Activated CD8-positive, alpha-beta T cell treated with anti-CD3 and anti-CD28 coated beads for 36 hours (primary cell): ENCODE measurements at regions of chr22 and their contacts with region 1.

Region 1: DNA sequence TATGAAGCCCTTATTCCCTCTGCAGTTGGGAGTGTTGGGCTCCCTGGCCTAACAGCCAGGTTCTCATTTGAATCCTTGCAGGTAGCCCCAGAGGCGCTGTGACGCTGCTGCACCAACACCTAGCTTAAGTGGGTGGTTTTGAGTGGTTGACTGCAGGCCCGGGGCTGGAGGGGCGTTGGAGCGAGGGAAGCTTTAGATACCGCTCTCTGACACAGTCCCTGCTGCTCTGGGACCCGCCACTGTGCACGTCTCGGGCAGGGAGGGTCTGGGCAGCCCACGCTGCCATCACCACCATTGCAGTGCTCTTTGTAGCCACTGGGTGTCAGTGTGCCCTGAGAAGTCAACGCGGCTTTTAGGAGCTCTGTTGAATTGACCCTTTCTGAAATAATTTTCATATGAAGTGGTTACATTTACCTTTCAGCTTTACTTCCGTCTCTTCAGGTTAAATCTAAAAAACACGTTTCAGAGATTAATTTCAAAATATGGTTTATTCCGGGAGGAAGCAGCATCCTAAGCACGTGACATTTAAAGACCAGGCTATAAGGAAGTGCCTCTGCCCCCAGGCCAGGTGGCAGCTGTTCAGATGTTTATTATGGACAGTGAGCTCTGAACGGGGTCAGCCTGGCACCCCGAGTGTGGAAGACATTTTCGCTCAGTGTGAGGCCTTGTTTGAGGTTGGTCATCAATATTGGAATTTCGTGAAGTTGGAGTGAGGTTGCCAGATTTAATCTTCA is 30.9 kb upstream of the PARVB start:
- DNase-seq: peak; percentile 72
- ATAC-seq: peak; percentile 86
- H3K4me3 Mint-ChIP-seq: no peak overlapping the region
- H3K27ac Mint-ChIP-seq: no peak overlapping the region
- H3K4me1 Mint-ChIP-seq: peaks cover 21% of the 10 kb centered on the region
- H3K27me3 Mint-ChIP-seq: no peaks in the 10 kb centered on the region
- CTCF ChIP-seq: peak; percentile 96

Region 2: GRCh38 chr22:44026630-44027511 is 33.7 kb after region 1 on chr22:
- CTCF ChIA-PET with region 1: interaction called, 19 read pairs
- POLR2A ChIA-PET with region 1: interaction called, 6 read pairs
- intact Hi-C with region 1: no loop called
- DNase-seq: peak; percentile 93
- ATAC-seq: peak; percentile 80
- H3K4me3 Mint-ChIP-seq: peak overlapping the region; percentile 89
- H3K27ac Mint-ChIP-seq: peak overlapping the region; percentile 97
- H3K4me1 Mint-ChIP-seq: peaks cover 49% of the 10 kb centered on the region
- H3K27me3 Mint-ChIP-seq: peaks cover 7% of the 10 kb centered on the region
- CTCF ChIP-seq: no peak

Region 3: DNA sequence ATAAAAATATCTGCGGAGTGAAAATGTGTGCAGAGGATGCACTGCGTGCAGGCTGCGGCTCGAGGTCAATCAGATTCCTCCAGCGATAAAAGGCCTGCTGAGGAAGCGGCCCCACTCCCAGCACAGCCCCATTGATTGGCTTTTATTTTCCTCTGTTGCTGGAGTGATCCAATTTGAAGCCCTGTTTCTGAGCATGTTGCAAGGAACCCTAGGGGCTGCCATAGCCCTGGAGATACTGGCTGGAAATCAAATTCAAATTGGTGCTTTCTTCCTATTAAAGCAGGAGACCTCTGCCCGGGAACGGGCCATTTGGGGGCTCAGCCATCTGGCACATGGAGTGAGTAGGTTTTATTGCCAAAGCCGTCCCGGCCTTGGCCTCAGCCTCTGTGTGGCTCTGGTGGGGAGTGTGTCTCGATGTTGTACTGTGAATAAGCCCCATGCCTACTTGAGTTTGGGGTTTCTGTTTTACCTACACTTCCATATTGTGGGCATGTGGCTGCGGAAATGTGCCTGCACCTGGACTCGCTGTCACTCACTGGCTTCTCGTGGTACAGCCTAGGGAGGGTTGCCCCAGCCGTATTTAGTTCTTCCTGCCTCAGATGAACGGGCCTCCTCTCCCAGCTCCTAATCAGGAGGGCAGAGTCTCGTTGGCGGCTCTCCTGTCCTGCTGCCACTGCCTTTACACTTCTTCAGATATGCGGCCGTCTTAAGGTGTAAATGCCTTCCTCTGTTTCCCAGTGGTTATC is 56.5 kb after region 1 on chr22:
- CTCF ChIA-PET with region 1: interaction called, 10 read pairs
- POLR2A ChIA-PET with region 1: no interaction called
- intact Hi-C with region 1: no loop called
- DNase-seq: no peak
- ATAC-seq: no peak
- H3K4me3 Mint-ChIP-seq: no peak overlapping the region
- H3K27ac Mint-ChIP-seq: no peak overlapping the region
- H3K4me1 Mint-ChIP-seq: peaks cover 8% of the 10 kb centered on the region
- H3K27me3 Mint-ChIP-seq: peaks cover 6% of the 10 kb centered on the region
- CTCF ChIP-seq: no peak

Region 4: GRCh38 chr22:44180706-44181032 is 187.5 kb after region 1 on chr22 and contains the start of gene PARVG:
- CTCF ChIA-PET with region 1: interaction called, 13 read pairs
- POLR2A ChIA-PET with region 1: no interaction called
- intact Hi-C with region 1: no loop called
- DNase-seq: peak; percentile 59
- ATAC-seq: peak; percentile 41
- H3K4me3 Mint-ChIP-seq: peak within 1 kb of the TSS; percentile 94
- H3K27ac Mint-ChIP-seq: peak within 1 kb of the TSS; percentile 98
- H3K4me1 Mint-ChIP-seq: peaks cover 28% of the 10 kb centered on the region
- H3K27me3 Mint-ChIP-seq: no peaks in the 10 kb centered on the region
- CTCF ChIP-seq: no peak
- total RNA-seq, gene PARVG: 76.5 to 76.9 TPM